Heart right ventricle (tissue), 16 donors: ENCODE measurements at regions of chr1 and their contacts with region 1.

Region 1: GRCh38 chr1:27097484-27097917 is 57.4 kb downstream of the SLC9A1 start:
- DNase-seq: peak; percentile 74 to 77
- ATAC-seq: peak; percentile 56 to 73 (median 63)
- H3K4me3 ChIP-seq: no peak overlapping the region
- H3K27ac ChIP-seq: peak overlapping the region in 2 of 10 donors; percentile 71 to 80
- H3K4me1 ChIP-seq: peaks cover 14 to 39% (median 35%) of the 10 kb centered on the region in 9 donors
- H3K27me3 ChIP-seq: no peaks in the 10 kb centered on the region
- CTCF ChIP-seq: peak; percentile 96 to 99 (median 97)

Region 2: DNA sequence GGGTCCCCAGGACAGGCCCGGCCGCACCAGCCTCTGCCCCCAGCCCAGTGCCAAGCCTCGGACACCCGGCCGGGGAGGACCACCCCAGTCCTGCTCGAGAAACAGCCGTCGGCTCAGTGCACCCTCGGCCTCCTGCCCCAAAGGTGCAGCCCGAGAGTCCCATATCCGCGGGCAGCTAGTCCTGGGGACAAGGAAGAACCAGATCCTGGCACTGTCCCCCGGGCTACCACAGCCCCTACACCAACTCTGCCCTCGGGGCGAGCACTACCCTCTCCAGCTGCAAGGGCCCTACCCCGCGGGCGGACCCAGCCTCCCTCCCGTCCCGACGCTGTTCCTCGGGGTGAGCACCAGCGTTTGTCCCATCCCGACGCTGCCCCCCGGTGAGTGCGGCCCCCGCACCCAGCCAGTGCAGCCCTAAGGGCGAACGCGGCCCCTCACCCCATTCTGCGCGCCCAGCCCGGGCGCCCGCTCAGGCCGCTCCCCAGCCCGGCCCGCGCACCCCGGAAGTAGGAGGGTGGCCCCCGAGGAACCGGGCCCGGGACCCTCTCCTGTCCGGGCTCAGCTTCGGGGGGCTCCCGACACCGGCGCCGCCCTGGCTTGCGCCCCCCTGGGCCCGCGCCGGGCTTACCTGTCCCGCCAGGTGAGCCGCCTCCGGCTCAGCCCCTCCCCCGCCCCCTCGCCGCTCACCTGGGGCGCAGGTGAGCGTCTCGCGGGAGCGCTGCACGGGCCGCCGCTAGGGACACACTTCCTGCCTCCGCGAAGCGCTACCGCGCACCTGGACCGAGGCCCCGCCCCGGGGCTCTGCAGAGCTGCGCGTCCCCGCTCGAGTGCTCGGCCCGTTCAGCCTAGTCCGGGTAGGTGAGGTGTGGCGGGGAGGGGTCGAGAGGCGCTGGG is 137.5 kb before region 1 on chr1 and contains the start of gene KDF1:
- intact Hi-C with region 1: loop called in 2 of 10 experiments (anchors 10 kb)
- DNase-seq: no peak
- ATAC-seq: peak in 5 of 8 donors; percentile 25 to 56 (median 35)
- H3K4me3 ChIP-seq: peak within 1 kb of the TSS; percentile 10 to 57 (median 44)
- H3K27ac ChIP-seq: no peak within 1 kb of the TSS
- H3K4me1 ChIP-seq: peaks cover 0 to 12% (median 10%) of the 10 kb centered on the region in 9 donors
- H3K27me3 ChIP-seq: peaks cover 14 to 66% (median 46%) of the 10 kb centered on the region in 7 donors
- CTCF ChIP-seq: peak in 1 of 9 donors; percentile 12
- total RNA-seq, gene KDF1: 0.21 to 0.26 (median 0.24) TPM in 4 of 10 donors, not detected in the others

Region 3: DNA sequence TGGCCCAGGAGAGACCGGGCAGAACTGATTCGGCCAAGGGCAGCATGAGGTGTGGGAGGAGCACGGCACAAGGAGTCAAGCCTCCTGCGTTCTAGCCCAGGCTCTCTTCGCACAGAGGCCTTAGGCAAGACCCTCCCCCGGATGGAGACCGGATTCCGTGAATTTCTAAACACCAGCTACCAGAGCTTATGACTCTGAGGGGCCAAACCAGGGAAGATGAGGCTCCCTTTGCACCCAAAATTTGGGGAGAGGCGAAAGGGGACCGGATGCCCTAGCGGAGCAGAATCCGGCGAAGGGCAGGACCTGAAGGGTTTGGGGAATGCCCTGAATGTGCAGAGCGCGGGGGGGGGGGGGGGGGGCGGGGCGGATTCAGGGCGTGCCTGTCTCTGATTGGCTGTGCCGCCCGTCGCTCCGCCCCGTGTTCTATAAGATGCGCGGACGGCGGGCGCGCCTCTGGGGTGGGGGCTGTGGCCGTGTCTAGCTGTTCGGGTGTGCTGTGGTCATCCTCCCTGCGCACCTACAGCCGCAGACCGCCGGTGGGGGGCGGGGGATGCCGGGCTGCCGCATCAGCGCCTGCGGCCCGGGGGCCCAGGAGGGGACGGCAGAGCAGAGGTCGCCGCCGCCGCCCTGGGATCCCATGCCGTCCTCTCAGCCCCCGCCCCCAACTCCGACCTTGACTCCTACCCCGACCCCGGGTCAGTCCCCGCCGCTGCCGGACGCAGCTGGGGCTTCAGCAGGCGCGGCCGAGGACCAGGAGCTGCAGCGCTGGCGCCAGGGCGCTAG is 104.1 kb before region 1 on chr1 and contains the start of gene TRNP1:
- intact Hi-C with region 1: loop called in 9 of 10 experiments (anchors 1 to 10 kb)
- DNase-seq: peak; percentile 59 to 82
- ATAC-seq: peak; percentile 60 to 79 (median 68)
- H3K4me3 ChIP-seq: peak within 1 kb of the TSS; percentile 53 to 85 (median 70)
- H3K27ac ChIP-seq: peak within 1 kb of the TSS; percentile 27 to 82 (median 58)
- H3K4me1 ChIP-seq: peaks cover 13 to 36% (median 30%) of the 10 kb centered on the region in 9 donors
- H3K27me3 ChIP-seq: peaks cover 0 to 67% (median 45%) of the 10 kb centered on the region in 7 donors
- CTCF ChIP-seq: no peak
- total RNA-seq, gene TRNP1: 11.9 to 32.5 (median 22.3) TPM

Region 4: GRCh38 chr1:26999440-26999987 is 98.0 kb before region 1 on chr1:
- intact Hi-C with region 1: loop called in 9 of 10 experiments (anchors 1 to 10 kb)
- DNase-seq: peak; percentile 66 to 78
- ATAC-seq: peak; percentile 48 to 87 (median 78)
- H3K4me3 ChIP-seq: no peak overlapping the region
- H3K27ac ChIP-seq: peak overlapping the region; percentile 58 to 87 (median 76)
- H3K4me1 ChIP-seq: peaks cover 37 to 75% (median 62%) of the 10 kb centered on the region in 9 donors
- H3K27me3 ChIP-seq: peaks cover 0 to 29% (median 20%) of the 10 kb centered on the region in 7 donors
- CTCF ChIP-seq: no peak

Region 5: DNA sequence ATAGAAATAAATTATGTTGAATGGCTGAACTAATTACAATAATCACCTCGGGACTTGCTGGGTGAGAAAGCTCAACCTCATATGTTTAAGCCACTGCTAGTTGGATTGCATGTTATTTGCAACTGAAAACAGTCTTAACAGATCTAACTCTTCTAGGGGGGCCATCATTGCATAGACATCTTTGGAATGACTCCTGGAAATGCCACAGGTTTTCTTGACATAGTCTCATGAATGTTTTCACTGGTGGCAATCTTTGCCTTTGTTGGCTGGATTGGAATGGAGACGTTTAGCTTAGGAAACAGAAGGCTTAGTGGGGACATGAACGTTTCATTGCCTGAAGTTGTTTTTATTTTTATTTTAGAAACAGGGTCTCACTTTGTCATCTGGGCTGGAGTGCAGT is 128.1 kb after region 1 on chr1:
- intact Hi-C with region 1: no loop called
- DNase-seq: no peak
- ATAC-seq: no peak
- H3K4me3 ChIP-seq: no peak overlapping the region
- H3K27ac ChIP-seq: no peak overlapping the region
- H3K4me1 ChIP-seq: no peaks in the 10 kb centered on the region
- H3K27me3 ChIP-seq: no peaks in the 10 kb centered on the region
- CTCF ChIP-seq: no peak